ENCODE measurements at regions of chr5 and their contacts with region 1.

Region 1: GRCh38 chr5:133610489-133611356 is 1.6 kb downstream of the FSTL4 start:
- DNase-seq: peak; percentile 26
- H3K4me3 ChIP-seq: no peak overlapping the region
- H3K27ac ChIP-seq: no peak overlapping the region
- H3K4me1 ChIP-seq: peaks cover 17% of the 10 kb centered on the region
- H3K27me3 ChIP-seq: peaks cover 46 to 71% of the 10 kb centered on the region in 2 experiments
- CTCF ChIP-seq: peak; percentile 32 to 37
- POLR2A ChIP-seq: no peak

Region 2: GRCh38 chr5:133552931-133553525 is 57.7 kb before region 1 on chr5:
- CTCF ChIA-PET with region 1: interaction called, 5 read pairs
- POLR2A ChIA-PET with region 1: no interaction called
- dilution Hi-C with region 1: no loop called
- intact Hi-C with region 1: loop called (anchors 1 kb)
- DNase-seq: peak; percentile 55
- H3K4me3 ChIP-seq: no peak overlapping the region
- H3K27ac ChIP-seq: no peak overlapping the region
- H3K4me1 ChIP-seq: no peaks in the 10 kb centered on the region
- H3K27me3 ChIP-seq: peaks cover 2 to 10% of the 10 kb centered on the region in 2 experiments
- CTCF ChIP-seq: peak; percentile 75 to 89
- POLR2A ChIP-seq: no peak

Measured in endothelial cell of umbilical vein (primary cell).